ENCODE measurements at regions of chr4 and their contacts with region 1.

Region 1: DNA sequence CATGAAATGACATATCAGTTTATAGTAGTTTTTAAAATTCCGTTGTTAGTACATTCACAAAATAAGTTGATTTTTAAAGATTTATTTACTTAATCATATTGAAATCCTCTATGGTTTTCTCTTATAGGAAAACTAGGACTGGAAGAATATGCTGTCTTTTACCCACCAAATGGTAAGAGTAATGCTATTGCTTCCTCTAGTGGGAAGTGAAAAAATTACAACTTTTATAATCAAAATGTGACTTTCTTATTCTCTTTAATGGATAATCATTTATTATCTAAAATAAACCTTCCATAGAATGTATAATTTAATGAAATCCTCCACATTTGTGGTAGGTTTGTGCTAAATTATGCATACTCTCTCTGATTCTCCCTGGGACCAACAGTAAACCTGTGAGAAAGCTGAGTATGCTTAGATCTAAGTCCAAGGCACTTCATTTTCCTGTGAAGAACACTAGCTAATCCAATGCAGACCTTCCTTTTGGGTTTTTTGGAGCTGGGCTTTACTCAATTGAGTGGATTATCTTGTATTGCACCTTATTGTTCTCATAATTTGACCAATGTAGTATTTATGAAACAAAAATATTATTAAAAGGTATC is 136.2 kb downstream of the TBC1D19 start:
- DNase-seq: peak in 1 of 4 donors; percentile 33
- ATAC-seq: no peak
- H3K4me3 ChIP-seq: no peak overlapping the region
- H3K27ac ChIP-seq: no peak overlapping the region
- H3K4me1 ChIP-seq: no peaks in the 10 kb centered on the region
- H3K27me3 ChIP-seq: no peaks in the 10 kb centered on the region
- CTCF ChIP-seq: peak in 1 of 2 donors; percentile 61

Region 2: DNA sequence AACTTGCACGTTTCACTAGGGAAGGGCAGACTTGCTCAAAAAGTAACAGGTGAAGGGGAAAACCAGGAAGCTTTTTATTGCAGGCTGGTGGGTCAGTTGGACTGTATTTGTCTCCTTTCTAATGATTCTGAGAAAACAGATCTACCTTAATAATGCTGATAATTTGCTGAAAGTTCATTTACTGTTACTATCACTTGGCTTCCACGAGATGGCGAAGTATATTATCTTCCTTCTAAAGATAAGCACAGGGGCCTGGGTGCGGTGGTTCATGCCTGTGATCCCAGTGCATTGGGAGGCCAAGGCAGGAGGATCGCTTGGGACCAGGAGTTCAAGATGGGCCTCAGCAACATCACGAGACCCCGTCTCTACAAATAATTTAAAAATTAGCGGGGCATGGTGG is 246.2 kb before region 1 on chr4:
- intact Hi-C with region 1: loop called in 1 of 2 experiments (anchors 10 kb)
- DNase-seq: no peak
- ATAC-seq: no peak
- H3K4me3 ChIP-seq: no peak overlapping the region
- H3K27ac ChIP-seq: no peak overlapping the region
- H3K4me1 ChIP-seq: no peaks in the 10 kb centered on the region
- H3K27me3 ChIP-seq: no peaks in the 10 kb centered on the region
- CTCF ChIP-seq: no peak

Measured in left lung (tissue), 14 donors.